Gastrocnemius medialis (tissue), 4 donors: ENCODE measurements at regions of chr10 and their contacts with region 1.

Region 1: GRCh38 chr10:74826142-74827044 is at the start of gene KAT6B:
- DNase-seq: peak; percentile 100
- ATAC-seq: peak; percentile 81 to 83
- H3K4me3 ChIP-seq: peak within 1 kb of the TSS; percentile 92 to 97 (median 96)
- H3K27ac ChIP-seq: peak within 1 kb of the TSS; percentile 94 to 100 (median 98)
- H3K4me1 ChIP-seq: peaks cover 43 to 50% of the 10 kb centered on the region in 2 donors
- H3K27me3 ChIP-seq: no peaks in the 10 kb centered on the region
- CTCF ChIP-seq: peak in 1 of 5 experiments; percentile 9
- POLR2A ChIP-seq: peak; percentile 22 to 77
- total RNA-seq, gene KAT6B: 12.0 to 37.7 (median 21.6) TPM

Region 2: GRCh38 chr10:74255888-74256357 is 570.5 kb before region 1 on chr10:
- in situ Hi-C with region 1: loop called in 1 of 4 experiments (anchors 25 kb)
- intact Hi-C with region 1: no loop called
- DNase-seq: no peak
- ATAC-seq: no peak
- H3K4me3 ChIP-seq: no peak overlapping the region
- H3K27ac ChIP-seq: no peak overlapping the region
- H3K4me1 ChIP-seq: no peaks in the 10 kb centered on the region
- H3K27me3 ChIP-seq: no peaks in the 10 kb centered on the region
- CTCF ChIP-seq: no peak
- POLR2A ChIP-seq: no peak

Region 3: DNA sequence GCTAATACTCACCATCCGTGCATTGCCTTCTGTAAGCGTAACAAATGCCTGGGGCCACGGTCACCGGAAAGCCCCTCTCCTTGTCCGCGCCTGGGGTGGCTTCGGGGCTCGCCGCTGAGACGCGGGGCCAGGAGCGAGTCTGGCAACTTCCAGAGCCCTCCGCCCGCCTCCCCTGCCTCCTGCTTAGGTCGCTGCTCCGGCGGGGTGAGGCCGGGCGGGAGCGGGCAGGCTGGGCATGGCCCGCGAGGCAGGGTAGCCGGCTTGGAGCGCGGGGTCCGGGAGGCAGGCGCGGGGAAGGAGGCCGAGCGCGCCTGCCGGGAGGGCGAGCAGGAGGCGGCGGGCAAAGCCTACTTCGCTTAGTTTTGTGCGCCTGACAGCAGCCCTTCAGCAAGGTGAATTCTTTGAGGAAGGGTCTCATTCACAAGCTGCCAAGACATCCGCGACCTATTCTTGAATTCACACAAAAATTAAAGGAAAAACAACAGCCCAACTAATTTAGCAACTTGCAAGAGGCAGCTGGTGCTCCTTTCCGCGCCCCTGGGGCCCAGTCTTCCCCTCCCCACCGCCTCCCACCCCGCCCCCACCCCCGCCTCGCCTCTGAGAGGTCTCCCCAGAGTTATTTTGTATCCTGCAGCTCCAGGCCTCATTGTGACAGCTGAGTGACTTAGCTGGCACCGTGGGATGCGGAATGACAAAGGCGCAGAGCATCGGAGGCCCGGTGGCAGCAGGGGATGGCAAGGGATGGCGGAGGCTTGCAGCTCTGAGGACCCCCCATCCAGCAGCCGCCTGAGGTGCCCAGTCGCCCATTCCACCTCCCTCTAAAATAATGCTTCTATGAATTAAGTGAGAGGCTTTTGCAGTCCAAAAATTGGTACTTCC is 12.8 kb before region 1 on chr10:
- in situ Hi-C with region 1: no loop called
- intact Hi-C with region 1: no loop called
- DNase-seq: no peak
- ATAC-seq: no peak
- H3K4me3 ChIP-seq: no peak overlapping the region
- H3K27ac ChIP-seq: no peak overlapping the region
- H3K4me1 ChIP-seq: no peaks in the 10 kb centered on the region
- H3K27me3 ChIP-seq: no peaks in the 10 kb centered on the region
- CTCF ChIP-seq: no peak
- POLR2A ChIP-seq: no peak

Region 4: GRCh38 chr10:75294866-75295701 is 468.7 kb after region 1 on chr10:
- in situ Hi-C with region 1: no loop called
- intact Hi-C with region 1: loop called (anchors 10 kb)
- DNase-seq: peak; percentile 69 to 80
- ATAC-seq: peak; percentile 76 to 77
- H3K4me3 ChIP-seq: peak overlapping the region; percentile 58 to 76 (median 64)
- H3K27ac ChIP-seq: peak overlapping the region; percentile 87 to 92 (median 90)
- H3K4me1 ChIP-seq: peaks cover 21 to 22% of the 10 kb centered on the region in 2 donors
- H3K27me3 ChIP-seq: no peaks in the 10 kb centered on the region
- CTCF ChIP-seq: peak; percentile 29 to 60 (median 40)
- POLR2A ChIP-seq: peak; percentile 77 to 85